ENCODE measurements at regions of chr7 and their contacts with region 1.

Region 1: GRCh38 chr7:75914730-75915585 is at the start of gene POR:
- DNase-seq: peak; percentile 96 to 99 (median 97)
- H3K4me3 ChIP-seq: peak within 1 kb of the TSS; percentile 85
- H3K4me3 Mint-ChIP-seq: peak within 1 kb of the TSS; percentile 88 to 95 (median 92)
- H3K27ac ChIP-seq: peak within 1 kb of the TSS; percentile 96
- H3K27ac Mint-ChIP-seq: peak within 1 kb of the TSS; percentile 93 to 99 (median 96)
- H3K4me1 ChIP-seq: peaks cover 18% of the 10 kb centered on the region
- H3K4me1 Mint-ChIP-seq: peaks cover 33 to 45% (median 35%) of the 10 kb centered on the region in 3 donors
- H3K27me3 ChIP-seq: no peaks in the 10 kb centered on the region
- H3K27me3 Mint-ChIP-seq: no peaks in the 10 kb centered on the region
- total RNA-seq, gene POR: 40.7 to 41.6 TPM

Region 2: DNA sequence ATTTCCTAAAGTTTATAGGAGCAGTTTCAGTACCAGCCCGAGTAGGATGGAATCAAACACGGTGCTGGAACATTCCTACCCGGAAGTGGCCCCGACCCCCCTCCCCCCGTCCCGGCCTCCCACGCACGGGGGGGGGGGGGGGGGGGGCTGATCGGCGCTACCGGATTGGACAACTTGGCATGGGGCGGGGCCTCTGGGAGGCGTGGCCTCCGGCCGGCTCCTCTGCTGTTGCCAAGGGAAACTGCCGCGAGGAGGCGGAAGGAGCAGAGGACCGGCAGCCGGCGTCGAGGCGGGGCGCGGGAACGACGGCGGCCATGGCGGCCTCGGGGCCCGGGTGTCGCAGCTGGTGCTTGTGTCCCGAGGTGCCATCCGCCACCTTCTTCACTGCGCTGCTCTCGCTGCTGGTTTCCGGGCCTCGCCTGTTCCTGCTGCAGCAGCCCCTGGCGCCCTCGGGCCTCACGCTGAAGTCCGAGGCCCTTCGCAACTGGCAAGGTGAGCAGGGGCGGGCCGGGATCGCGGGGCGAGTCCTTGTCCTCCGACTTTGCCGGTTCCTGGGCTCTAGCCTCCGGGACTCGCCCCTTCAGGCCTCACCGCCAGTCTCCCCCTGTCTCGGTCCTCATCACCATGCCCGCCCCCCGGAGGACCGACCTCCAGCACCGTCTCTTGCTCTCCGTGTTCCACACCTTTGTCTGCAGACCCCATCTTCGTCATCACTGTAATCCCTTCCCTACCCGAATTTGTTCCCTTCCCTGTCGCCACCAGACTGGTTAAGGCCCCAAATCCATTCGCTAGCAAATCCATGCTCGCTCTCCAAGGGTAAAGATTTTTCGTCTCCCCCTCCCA is 36.0 kb before region 1 on chr7 and contains the start of gene RHBDD2:
- CTCF ChIA-PET with region 1: interaction called, 3 read pairs
- POLR2A ChIA-PET with region 1: interaction called, 17 read pairs
- DNase-seq: peak; percentile 89 to 98 (median 95)
- H3K4me3 ChIP-seq: peak within 1 kb of the TSS; percentile 79
- H3K4me3 Mint-ChIP-seq: peak within 1 kb of the TSS; percentile 95 to 99 (median 96)
- H3K27ac ChIP-seq: peak within 1 kb of the TSS; percentile 87
- H3K27ac Mint-ChIP-seq: peak within 1 kb of the TSS; percentile 95 to 100 (median 97)
- H3K4me1 ChIP-seq: peaks cover 22% of the 10 kb centered on the region
- H3K4me1 Mint-ChIP-seq: peaks cover 25 to 46% (median 37%) of the 10 kb centered on the region in 3 donors
- H3K27me3 ChIP-seq: no peaks in the 10 kb centered on the region
- H3K27me3 Mint-ChIP-seq: no peaks in the 10 kb centered on the region
- total RNA-seq, gene RHBDD2: 39.8 to 44.6 TPM

Region 3: DNA sequence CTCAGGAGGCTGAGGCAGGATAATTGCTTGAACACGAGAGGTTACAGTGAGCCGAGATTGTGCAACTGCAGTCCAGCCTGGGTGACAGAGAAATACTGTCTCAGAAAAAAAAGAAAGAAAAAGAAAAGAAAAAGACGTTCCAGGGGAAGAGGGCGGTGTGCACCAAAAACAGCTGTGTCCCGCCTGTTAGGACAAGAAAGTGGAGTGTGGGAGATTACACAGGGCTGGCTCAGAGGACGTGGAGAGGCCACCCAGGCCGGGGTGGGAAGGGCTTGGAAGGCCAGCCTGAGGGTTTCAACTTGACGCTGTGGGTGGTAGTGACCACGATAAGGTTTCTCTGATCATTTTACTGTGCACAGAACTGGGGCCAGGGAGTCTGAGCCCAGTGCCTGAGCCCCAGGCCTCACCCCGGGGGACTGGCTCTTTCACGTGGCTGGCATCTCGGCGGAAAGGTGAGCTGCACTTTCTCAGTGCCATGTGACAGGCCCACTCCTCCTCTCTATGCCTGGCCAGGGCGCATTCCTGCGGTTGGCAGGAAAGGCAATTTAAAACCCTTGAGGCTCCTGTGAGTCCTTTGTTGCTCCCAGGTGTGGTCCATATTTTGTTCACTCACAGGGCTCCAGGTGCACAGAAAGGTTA is 22.2 kb before region 1 on chr7:
- CTCF ChIA-PET with region 1: no interaction called
- POLR2A ChIA-PET with region 1: no interaction called
- DNase-seq: no peak
- H3K4me3 ChIP-seq: no peak overlapping the region
- H3K4me3 Mint-ChIP-seq: no peak overlapping the region
- H3K27ac ChIP-seq: no peak overlapping the region
- H3K27ac Mint-ChIP-seq: no peak overlapping the region
- H3K4me1 ChIP-seq: no peaks in the 10 kb centered on the region
- H3K4me1 Mint-ChIP-seq: no peaks in the 10 kb centered on the region
- H3K27me3 ChIP-seq: no peaks in the 10 kb centered on the region
- H3K27me3 Mint-ChIP-seq: no peaks in the 10 kb centered on the region

Measured in CD8-positive, alpha-beta memory T cell (primary cell).